ENCODE measurements at regions of chr2 and their contacts with region 1.

Region 1: DNA sequence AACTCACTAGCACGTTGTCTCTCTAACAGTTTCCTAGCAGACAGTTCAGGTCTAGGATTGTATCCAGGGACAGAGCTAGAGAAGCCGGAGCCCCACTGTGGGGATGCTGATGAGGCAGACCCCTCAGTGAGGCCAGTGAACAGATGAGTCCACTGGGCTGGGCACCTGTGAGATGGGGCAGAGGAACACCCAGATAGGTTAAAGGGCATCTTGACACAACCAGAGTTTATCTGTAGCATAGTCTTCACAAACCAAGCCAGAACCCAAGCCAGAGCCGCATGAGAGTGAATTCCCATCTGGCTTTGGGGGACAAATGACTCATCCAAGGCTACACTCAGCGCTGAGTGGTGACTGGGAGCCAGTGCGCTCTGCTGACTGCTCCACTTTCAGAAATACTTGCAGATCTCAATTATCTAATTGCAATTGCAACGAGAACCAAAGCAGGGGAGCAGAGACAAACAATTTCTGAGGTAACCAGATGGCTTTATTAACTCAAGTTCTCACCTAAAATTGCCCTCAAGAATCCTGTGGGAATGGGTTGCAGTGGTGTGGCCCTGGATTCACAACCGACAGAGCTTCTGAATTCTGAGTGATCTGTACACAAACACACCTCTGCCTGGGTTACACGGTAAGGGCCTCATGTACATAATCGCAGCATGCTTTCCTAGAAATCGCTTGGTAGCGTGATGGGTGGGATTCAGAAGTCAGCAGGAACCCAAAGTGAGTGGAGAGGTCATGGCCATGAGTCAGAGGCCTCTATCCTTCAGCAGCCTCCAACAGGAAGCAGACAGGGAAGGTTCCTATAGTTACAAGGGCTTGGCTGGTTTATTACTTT is 48.7 kb upstream of the MSH2 start:
- DNase-seq: no peak
- CTCF ChIP-seq: no peak

Region 2: DNA sequence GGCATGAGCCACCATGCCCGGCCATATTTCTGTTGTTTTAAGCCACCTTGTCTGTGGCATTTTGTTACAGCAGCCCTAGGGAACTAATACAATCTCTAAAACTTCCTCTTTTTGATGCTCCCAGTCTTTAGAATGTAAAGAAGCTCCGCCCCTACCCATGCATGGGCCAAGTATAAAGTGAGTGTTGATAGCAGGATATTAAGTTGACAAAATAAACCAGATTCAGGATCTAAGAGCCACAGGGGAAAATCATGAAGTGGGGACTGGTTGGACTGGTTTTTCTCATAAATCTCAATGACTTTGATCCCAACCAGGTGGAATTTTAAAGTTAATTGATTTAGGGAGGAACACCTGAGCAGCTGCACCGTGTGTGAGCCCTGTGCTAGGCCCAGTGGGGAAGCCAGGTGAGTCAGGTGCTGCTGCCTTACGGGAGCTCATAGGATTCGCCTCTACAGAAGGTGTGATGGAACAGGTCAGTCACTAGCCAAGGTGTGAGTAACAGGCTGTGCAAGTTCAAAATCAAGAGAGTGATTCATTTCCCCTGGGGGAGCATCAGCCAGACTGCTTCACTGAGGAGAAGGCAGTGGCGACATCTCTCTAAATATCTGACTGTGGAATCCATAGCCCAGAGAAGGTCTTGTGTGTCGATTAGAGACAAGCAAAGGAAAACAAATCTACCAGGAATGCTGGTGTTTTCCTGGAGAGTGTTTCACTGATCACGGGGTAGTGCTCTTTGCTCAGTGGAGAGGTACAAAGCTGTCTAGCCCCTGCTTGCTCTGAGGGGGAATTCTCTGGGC is 14.3 kb before region 1 on chr2:
- CTCF ChIA-PET with region 1: interaction called, 11 read pairs
- POLR2A ChIA-PET with region 1: no interaction called
- DNase-seq: no peak
- CTCF ChIP-seq: no peak

Measured in GM10248 (cell line).